ENCODE measurements at regions of chr1 and their contacts with region 1.

Region 1: GRCh38 chr1:23809751-23810171 is 9.2 kb upstream of the GALE start:
- DNase-seq: peak in 1 of 2 experiments; percentile 86
- H3K4me3 ChIP-seq: no peak overlapping the region
- H3K27ac ChIP-seq: no peak overlapping the region
- H3K4me1 ChIP-seq: peaks cover 0 to 1% (median 0%) of the 10 kb centered on the region in 4 experiments; a peak in 2 of 7 replicates
- H3K27me3 ChIP-seq: no peaks in the 10 kb centered on the region
- CTCF ChIP-seq: peak; percentile 90 to 97 (median 96)
- EP300 ChIP-seq: no peak
- POLR2A ChIP-seq: no peak
- RAD21 ChIP-seq: peak; percentile 82 to 85

Region 2: GRCh38 chr1:23651069-23651808 is 158.5 kb before region 1 on chr1:
- CTCF ChIA-PET with region 1: no interaction called
- POLR2A ChIA-PET with region 1: no interaction called
- DNase-seq: no peak
- H3K4me3 ChIP-seq: no peak overlapping the region
- H3K27ac ChIP-seq: no peak overlapping the region
- H3K4me1 ChIP-seq: no peaks in the 10 kb centered on the region
- H3K27me3 ChIP-seq: no peaks in the 10 kb centered on the region
- CTCF ChIP-seq: no peak
- EP300 ChIP-seq: no peak
- POLR2A ChIP-seq: no peak
- RAD21 ChIP-seq: no peak

Region 3: DNA sequence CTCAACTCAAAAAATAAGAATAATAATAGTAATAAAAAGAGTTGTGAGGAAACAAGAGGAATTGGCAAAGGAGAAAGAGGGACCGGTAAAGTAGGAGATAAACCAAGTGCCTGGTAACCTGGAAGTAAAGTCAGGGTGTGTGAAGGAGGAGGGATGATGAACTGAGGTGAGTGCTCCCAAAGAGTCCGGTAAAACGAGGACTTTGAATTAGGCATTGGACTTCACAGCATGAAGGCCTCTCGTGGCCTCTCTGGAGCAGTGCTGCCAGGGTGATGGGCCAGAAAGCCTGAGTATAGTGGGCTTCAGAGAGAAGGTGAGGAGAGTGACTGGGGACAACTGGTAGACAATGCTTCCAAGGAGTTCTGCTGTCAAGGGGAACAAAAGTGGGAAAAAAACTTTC is 100.5 kb before region 1 on chr1:
- CTCF ChIA-PET with region 1: no interaction called
- POLR2A ChIA-PET with region 1: no interaction called
- DNase-seq: no peak
- H3K4me3 ChIP-seq: no peak overlapping the region
- H3K27ac ChIP-seq: no peak overlapping the region
- H3K4me1 ChIP-seq: no peaks in the 10 kb centered on the region
- H3K27me3 ChIP-seq: no peaks in the 10 kb centered on the region
- CTCF ChIP-seq: no peak
- EP300 ChIP-seq: no peak
- POLR2A ChIP-seq: no peak
- RAD21 ChIP-seq: no peak

Region 4: DNA sequence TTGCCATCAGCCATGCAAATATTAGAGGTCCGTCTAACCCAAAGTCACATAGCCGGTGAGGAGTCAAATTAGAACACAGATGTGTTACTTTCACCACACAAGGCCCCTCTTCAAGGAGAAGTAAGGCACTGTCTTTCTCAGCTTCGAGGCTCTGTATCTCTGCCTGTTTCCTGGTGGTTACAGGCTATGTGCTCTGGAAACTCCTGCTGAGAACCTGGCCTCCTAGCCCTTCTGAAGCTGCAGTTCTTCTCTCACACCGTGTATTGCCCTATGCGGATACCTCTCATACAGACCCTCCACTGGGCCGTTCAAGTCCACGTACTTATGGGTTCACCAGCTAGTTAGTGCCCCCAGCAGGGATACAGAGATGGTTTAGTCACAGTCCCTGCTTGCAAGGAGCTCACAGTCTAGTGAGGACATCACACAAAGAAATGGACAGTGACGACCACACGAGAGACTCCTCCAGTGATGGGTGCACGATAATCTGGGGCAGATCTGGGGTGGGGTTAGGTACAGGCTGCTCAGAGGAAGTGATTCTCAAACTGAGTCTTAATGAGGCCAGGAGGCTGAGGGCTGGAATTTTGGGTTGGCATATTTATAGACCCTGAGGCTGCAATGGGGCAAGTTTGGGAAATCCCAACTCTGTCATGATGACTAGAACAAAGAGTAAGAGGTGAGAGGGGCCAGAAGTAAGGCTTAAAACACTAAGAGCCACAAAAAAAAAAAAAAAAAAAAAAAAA is 89.3 kb before region 1 on chr1:
- CTCF ChIA-PET with region 1: no interaction called
- POLR2A ChIA-PET with region 1: no interaction called
- DNase-seq: no peak
- H3K4me3 ChIP-seq: no peak overlapping the region
- H3K27ac ChIP-seq: no peak overlapping the region
- H3K4me1 ChIP-seq: no peaks in the 10 kb centered on the region
- H3K27me3 ChIP-seq: no peaks in the 10 kb centered on the region
- CTCF ChIP-seq: no peak
- EP300 ChIP-seq: no peak
- POLR2A ChIP-seq: no peak
- RAD21 ChIP-seq: no peak

Region 5: DNA sequence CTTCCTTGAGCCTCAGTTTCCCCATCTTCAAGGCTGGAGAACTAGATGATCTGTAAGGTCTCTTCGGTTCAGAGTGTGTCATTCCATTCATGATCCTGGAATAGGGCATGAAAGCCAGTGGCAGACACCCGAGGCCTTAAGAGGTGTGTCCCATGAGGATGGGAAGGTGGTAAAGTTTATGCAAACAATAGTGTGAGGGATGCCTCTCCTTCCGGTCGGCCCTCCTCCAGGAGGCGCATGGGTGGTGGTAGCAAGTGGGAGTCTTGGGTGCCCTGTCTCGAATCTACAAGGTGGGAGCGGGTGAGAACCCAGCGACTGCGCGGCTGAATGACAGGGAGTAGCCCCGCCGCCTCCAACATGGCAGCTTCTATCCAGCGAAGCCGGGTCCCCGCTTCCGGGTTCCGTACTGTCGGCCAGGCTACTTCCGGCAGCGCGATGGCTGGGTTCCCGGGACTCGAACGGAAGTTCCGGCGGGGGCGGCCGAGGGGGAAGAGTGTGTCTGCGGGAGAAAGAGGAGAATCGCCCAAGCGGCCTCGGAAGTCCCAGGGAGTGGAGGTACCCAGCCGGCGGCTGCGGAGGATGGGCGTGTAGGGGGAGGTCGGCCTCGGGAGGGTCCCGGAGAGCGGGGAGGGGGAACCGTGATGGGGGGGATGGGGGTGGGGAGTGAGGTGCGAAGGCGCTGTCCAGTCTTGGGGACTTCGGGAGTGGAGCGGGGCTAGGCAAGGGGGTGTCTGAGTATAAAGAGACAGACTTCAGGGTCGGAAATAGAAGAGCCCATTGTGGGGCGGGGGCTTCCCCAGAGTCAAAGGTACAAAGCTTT is 18.9 kb before region 1 on chr1 and contains the start of gene LYPLA2:
- CTCF ChIA-PET with region 1: interaction called, 26 read pairs
- POLR2A ChIA-PET with region 1: interaction called, 22 read pairs
- DNase-seq: peak in 1 of 2 experiments; percentile 92
- H3K4me3 ChIP-seq: peak within 1 kb of the TSS; percentile 63 to 100 (median 96)
- H3K27ac ChIP-seq: no peak within 1 kb of the TSS
- H3K4me1 ChIP-seq: peaks cover 0 to 11% (median 6%) of the 10 kb centered on the region in 4 experiments; a peak in 5 of 7 replicates
- H3K27me3 ChIP-seq: no peaks in the 10 kb centered on the region
- CTCF ChIP-seq: 0 out of 4 replicates have a peak, but pooled peaks of 1 of the 3 experiments have one; percentile 26
- EP300 ChIP-seq: no peak
- POLR2A ChIP-seq: no peak
- RAD21 ChIP-seq: no peak
- total RNA-seq, gene LYPLA2: 138 and 152 TPM in 2 replicates

Region 6: DNA sequence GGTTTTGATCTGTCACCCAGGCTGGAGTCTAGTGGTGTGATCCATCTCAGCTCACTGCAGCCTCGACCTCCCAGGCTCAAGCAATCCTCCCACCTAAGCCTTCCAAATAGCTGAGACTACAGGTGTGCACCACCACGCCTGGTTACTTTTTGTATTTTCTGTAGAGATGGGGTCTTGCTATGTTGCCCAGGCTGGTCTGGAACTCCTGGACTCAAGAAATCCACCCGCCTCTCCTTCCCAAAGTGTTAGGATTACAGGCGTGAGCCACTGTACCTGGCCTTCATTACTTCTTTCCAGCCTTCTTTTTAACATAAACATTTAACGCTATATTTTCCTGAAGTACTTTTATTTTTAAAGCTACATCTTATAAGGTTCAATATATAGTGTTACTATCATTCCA is 33.9 kb after region 1 on chr1:
- CTCF ChIA-PET with region 1: interaction called, 11 read pairs
- POLR2A ChIA-PET with region 1: interaction called, 3 read pairs
- DNase-seq: no peak
- H3K4me3 ChIP-seq: no peak overlapping the region
- H3K27ac ChIP-seq: no peak overlapping the region
- H3K4me1 ChIP-seq: no peaks in the 10 kb centered on the region
- H3K27me3 ChIP-seq: no peaks in the 10 kb centered on the region; a peak in 2 of 7 replicates
- CTCF ChIP-seq: no peak
- EP300 ChIP-seq: no peak
- POLR2A ChIP-seq: no peak
- RAD21 ChIP-seq: no peak

Region 7: GRCh38 chr1:23867953-23868556 is 58.3 kb after region 1 on chr1 and contains the start of gene FUCA1:
- CTCF ChIA-PET with region 1: interaction called, 40 read pairs
- POLR2A ChIA-PET with region 1: no interaction called
- DNase-seq: peak; percentile 90 to 96
- H3K4me3 ChIP-seq: peak within 1 kb of the TSS; percentile 58 to 75 (median 70)
- H3K27ac ChIP-seq: no peak within 1 kb of the TSS
- H3K4me1 ChIP-seq: no peaks in the 10 kb centered on the region; a peak in 1 of 7 replicates
- H3K27me3 ChIP-seq: peaks cover 6 to 28% (median 19%) of the 10 kb centered on the region in 4 experiments
- CTCF ChIP-seq: peak; percentile 79 to 94 (median 83)
- EP300 ChIP-seq: no peak
- POLR2A ChIP-seq: peak in 1 of 2 experiments; percentile 49; a peak in 1 of 3 replicates
- RAD21 ChIP-seq: peak; percentile 50 to 74
- total RNA-seq, gene FUCA1: 6.4 and 7.1 TPM in 2 replicates

Region 8: GRCh38 chr1:23916209-23917131 is 106.7 kb after region 1 on chr1:
- CTCF ChIA-PET with region 1: interaction called, 32 read pairs
- POLR2A ChIA-PET with region 1: interaction called, 3 read pairs
- DNase-seq: peak; percentile 59 to 83
- H3K4me3 ChIP-seq: no peak overlapping the region
- H3K27ac ChIP-seq: no peak overlapping the region
- H3K4me1 ChIP-seq: peaks cover 0 to 2% (median 0%) of the 10 kb centered on the region in 4 experiments; a peak in 2 of 7 replicates
- H3K27me3 ChIP-seq: no peaks in the 10 kb centered on the region
- CTCF ChIP-seq: peak; percentile 67 to 74 (median 73)
- EP300 ChIP-seq: no peak
- POLR2A ChIP-seq: no peak
- RAD21 ChIP-seq: peak; percentile 84 to 88

Measured in H1 (cell line).